AG04450 (cell line): ENCODE measurements at regions of chr2 and their contacts with region 1.

Region 1: DNA sequence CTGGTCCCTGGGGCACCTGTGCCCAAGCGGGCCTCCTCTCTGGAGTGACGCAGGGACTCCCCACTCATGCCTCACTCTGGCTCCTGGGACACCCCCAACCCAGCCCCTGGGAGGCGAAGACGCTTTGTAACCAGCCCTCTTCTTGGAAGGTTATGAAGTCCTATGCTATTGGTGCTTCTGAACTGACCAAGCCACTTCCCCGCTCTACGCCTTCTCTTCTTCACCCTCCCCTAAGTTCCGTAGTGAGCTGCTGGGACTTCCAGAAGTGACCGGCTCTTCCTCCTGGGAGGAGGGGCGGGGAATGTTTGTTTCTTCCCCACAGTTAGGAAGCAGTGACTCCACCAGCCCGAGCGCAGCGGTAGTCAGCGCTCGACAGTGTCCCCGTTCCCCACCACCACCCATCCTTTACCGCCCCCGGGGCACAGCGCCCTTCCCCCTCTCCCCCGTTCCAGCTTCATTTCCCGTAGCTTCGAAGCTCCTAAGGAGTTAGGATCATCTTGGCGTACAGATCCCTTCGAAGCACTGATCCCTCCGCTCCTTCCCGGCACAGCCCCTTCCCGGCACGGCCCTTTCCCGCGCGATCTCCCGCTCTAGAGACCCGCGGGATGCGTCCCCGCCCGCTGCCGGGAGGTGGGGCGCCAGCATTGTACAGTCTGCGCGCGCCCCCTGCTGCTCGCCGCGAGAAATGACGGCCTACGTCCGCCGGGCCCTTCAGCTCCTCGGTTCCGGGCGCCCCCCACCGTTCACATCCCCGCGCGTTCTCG is 25.3 kb upstream of the NOTO start:
- DNase-seq: peak; percentile 55
- H3K4me3 ChIP-seq: peak overlapping the region; percentile 71
- H3K27ac ChIP-seq: no peak overlapping the region
- H3K27me3 ChIP-seq: peaks cover 17% of the 10 kb centered on the region
- CTCF ChIP-seq: peak; percentile 91

Region 2: GRCh38 chr2:72367530-72368225 is 809.4 kb before region 1 on chr2:
- CTCF ChIA-PET with region 1: no interaction called
- POLR2A ChIA-PET with region 1: no interaction called
- DNase-seq: peak; percentile 67
- H3K4me3 ChIP-seq: no peak overlapping the region
- H3K27ac ChIP-seq: no peak overlapping the region
- H3K27me3 ChIP-seq: no peaks in the 10 kb centered on the region
- CTCF ChIP-seq: peak; percentile 40; the same call in 1 of the 2 replicates

Region 3: GRCh38 chr2:72993147-72993932 is 183.7 kb before region 1 on chr2:
- CTCF ChIA-PET with region 1: interaction called, 26 read pairs
- POLR2A ChIA-PET with region 1: no interaction called
- DNase-seq: no peak
- H3K4me3 ChIP-seq: no peak overlapping the region
- H3K27ac ChIP-seq: no peak overlapping the region
- H3K27me3 ChIP-seq: no peaks in the 10 kb centered on the region
- CTCF ChIP-seq: peak; percentile 79

Region 4: GRCh38 chr2:73112913-73113633 is 64.0 kb before region 1 on chr2 and contains the start of gene RAB11FIP5:
- CTCF ChIA-PET with region 1: interaction called, 10 read pairs
- POLR2A ChIA-PET with region 1: no interaction called
- DNase-seq: peak; percentile 55
- H3K4me3 ChIP-seq: peak within 1 kb of the TSS; percentile 84
- H3K27ac ChIP-seq: peak within 1 kb of the TSS; percentile 99
- H3K27me3 ChIP-seq: no peaks in the 10 kb centered on the region
- CTCF ChIP-seq: no peak
- polyA plus RNA-seq, gene RAB11FIP5: 29.6 and 37.5 TPM in 2 replicates

Region 5: DNA sequence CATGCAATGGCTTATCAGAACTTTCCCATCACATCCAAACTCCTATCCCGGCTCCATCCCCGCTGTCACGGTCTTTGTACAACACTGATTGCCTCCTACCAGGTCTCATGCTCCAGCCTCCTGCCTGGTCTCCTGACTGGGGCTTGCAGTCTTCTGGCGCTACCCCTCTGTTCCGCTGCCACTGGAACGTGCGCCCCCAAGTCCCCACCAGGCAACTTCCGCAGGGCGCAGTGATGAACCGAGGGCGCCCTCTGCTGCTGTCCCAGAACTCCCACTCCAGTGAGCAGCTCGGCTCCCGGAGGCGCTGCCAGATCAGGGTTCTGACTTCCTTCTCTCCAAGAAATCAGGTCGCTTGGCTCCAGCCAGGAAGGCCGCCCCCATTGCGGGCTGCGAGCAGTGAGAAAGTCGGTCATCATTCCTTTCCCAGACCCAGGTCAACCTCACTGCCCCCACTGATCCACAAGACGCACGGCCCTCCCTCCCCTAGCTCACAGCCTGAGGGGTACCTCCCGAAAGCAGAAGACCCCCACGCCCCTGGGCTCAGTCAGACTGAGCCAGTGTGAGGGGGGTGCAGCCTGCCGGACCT is 20.4 kb before region 1 on chr2:
- CTCF ChIA-PET with region 1: interaction called, 25 read pairs
- POLR2A ChIA-PET with region 1: no interaction called
- DNase-seq: no peak
- H3K4me3 ChIP-seq: peak overlapping the region; percentile 44
- H3K27ac ChIP-seq: no peak overlapping the region
- H3K27me3 ChIP-seq: peaks cover 11% of the 10 kb centered on the region
- CTCF ChIP-seq: peak; percentile 87

Region 6: GRCh38 chr2:73187549-73187948 is 10.5 kb after region 1 on chr2:
- CTCF ChIA-PET with region 1: interaction called, 19 read pairs
- POLR2A ChIA-PET with region 1: no interaction called
- DNase-seq: no peak
- H3K4me3 ChIP-seq: no peak overlapping the region
- H3K27ac ChIP-seq: no peak overlapping the region
- H3K27me3 ChIP-seq: peaks cover 49% of the 10 kb centered on the region
- CTCF ChIP-seq: no peak

Region 7: GRCh38 chr2:73212448-73213176 is 35.5 kb after region 1 on chr2:
- CTCF ChIA-PET with region 1: interaction called, 45 read pairs
- POLR2A ChIA-PET with region 1: interaction called, 7 read pairs
- DNase-seq: peak; percentile 55
- H3K4me3 ChIP-seq: no peak overlapping the region
- H3K27ac ChIP-seq: no peak overlapping the region
- H3K27me3 ChIP-seq: peaks cover 4% of the 10 kb centered on the region
- CTCF ChIP-seq: peak; percentile 90

Region 8: GRCh38 chr2:73297151-73297559 is 120.1 kb after region 1 on chr2:
- CTCF ChIA-PET with region 1: no interaction called
- POLR2A ChIA-PET with region 1: no interaction called
- DNase-seq: no peak
- H3K4me3 ChIP-seq: no peak overlapping the region
- H3K27ac ChIP-seq: no peak overlapping the region
- H3K27me3 ChIP-seq: peaks cover 58% of the 10 kb centered on the region
- CTCF ChIP-seq: no peak

Region 9: DNA sequence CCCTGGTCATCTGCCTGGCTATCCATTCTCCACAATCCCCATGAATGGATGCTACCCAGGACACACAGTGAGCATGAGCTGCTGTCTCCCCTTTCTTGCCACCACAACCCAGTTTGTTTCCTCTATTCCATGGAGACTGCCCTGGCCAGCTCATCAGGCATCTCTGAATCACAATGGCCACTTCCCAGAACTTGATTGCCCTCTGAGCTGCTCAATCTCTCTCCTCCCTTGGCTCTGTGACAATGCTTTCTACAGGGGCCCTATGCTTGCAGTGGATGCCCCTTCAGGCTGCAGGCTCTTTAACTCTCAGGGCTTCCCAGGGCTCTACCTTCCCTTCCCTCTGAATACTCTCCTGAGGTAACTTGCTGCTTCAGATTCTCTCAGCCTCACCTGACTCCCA is 1180.6 kb after region 1 on chr2:
- CTCF ChIA-PET with region 1: no interaction called
- POLR2A ChIA-PET with region 1: no interaction called
- DNase-seq: no peak
- H3K4me3 ChIP-seq: no peak overlapping the region
- H3K27ac ChIP-seq: no peak overlapping the region
- H3K27me3 ChIP-seq: no peaks in the 10 kb centered on the region
- CTCF ChIP-seq: no peak